CD4-positive, alpha-beta T cell (primary cell): ENCODE measurements at regions of chr1 and their contacts with region 1.

Region 1: DNA sequence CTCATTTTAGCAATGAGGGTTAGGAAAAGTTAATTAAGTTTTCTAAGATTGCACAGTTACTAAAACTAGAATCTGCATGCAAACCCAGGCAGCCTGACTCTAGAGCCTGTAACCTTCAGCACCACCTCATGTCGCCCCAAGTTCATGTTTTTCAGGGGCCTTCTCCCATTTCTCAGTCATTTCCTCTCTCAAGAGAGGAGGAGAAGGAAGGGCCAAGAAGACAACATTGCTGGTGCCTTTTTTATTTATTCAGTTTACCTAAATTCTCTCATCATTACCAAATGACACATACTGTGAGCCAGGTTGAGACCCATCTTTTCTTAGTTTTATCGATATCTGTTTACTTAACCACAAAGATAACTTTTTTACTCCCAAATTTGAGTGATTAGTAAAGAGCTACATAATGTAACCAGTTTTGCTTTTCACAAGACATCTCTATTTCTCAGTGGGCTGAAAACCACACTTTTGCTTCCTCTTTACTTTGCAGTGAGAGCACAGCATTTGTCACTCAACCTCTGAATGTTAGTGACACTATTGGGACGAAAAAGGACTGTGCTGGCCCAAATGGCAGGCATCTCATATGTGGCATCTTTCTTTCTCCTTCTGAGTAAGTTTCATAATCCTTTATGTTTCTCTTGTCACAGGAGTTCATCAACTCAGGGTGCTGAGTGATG is at the start of gene CD101:
- DNase-seq: peak in 3 of 14 experiments; percentile 43 to 52 (median 44)
- ATAC-seq: peak; percentile 64
- H3K4me3 ChIP-seq: no peak within 1 kb of the TSS
- H3K4me3 Mint-ChIP-seq: peak within 1 kb of the TSS; percentile 62
- H3K27ac ChIP-seq: peak within 1 kb of the TSS in 1 of 2 donors; percentile 39
- H3K27ac Mint-ChIP-seq: peak within 1 kb of the TSS; percentile 76
- H3K4me1 ChIP-seq: peaks cover 28% of the 10 kb centered on the region
- H3K4me1 Mint-ChIP-seq: peaks cover 56% of the 10 kb centered on the region
- H3K27me3 ChIP-seq: no peaks in the 10 kb centered on the region
- H3K27me3 Mint-ChIP-seq: no peaks in the 10 kb centered on the region
- CTCF ChIP-seq: no peak
- total RNA-seq, gene CD101: 2.1 to 2.2 TPM

Region 2: GRCh38 chr1:117036018-117036461 is 34.6 kb after region 1 on chr1:
- CTCF ChIA-PET with region 1: no interaction called
- POLR2A ChIA-PET with region 1: no interaction called
- intact Hi-C with region 1: loop called in 1 of 2 experiments (anchors 5 kb)
- DNase-seq: no peak
- ATAC-seq: no peak
- H3K4me3 ChIP-seq: no peak overlapping the region
- H3K4me3 Mint-ChIP-seq: no peak overlapping the region
- H3K27ac ChIP-seq: no peak overlapping the region
- H3K27ac Mint-ChIP-seq: no peak overlapping the region
- H3K4me1 ChIP-seq: peaks cover 5% of the 10 kb centered on the region
- H3K4me1 Mint-ChIP-seq: peaks cover 18% of the 10 kb centered on the region
- H3K27me3 ChIP-seq: no peaks in the 10 kb centered on the region
- H3K27me3 Mint-ChIP-seq: no peaks in the 10 kb centered on the region
- CTCF ChIP-seq: no peak

Region 3: GRCh38 chr1:117512743-117513321 is 511.4 kb after region 1 on chr1:
- CTCF ChIA-PET with region 1: no interaction called
- POLR2A ChIA-PET with region 1: no interaction called
- intact Hi-C with region 1: no loop called
- DNase-seq: peak in 3 of 14 experiments; percentile 40 to 52 (median 42)
- ATAC-seq: no peak
- H3K4me3 ChIP-seq: no peak overlapping the region
- H3K4me3 Mint-ChIP-seq: no peak overlapping the region
- H3K27ac ChIP-seq: no peak overlapping the region
- H3K27ac Mint-ChIP-seq: no peak overlapping the region
- H3K4me1 ChIP-seq: no peaks in the 10 kb centered on the region
- H3K4me1 Mint-ChIP-seq: no peaks in the 10 kb centered on the region
- H3K27me3 ChIP-seq: no peaks in the 10 kb centered on the region
- H3K27me3 Mint-ChIP-seq: no peaks in the 10 kb centered on the region
- CTCF ChIP-seq: peak; percentile 60

Region 4: GRCh38 chr1:117886101-117886795 is 884.9 kb after region 1 on chr1:
- CTCF ChIA-PET with region 1: no interaction called
- POLR2A ChIA-PET with region 1: no interaction called
- intact Hi-C with region 1: no loop called
- DNase-seq: no peak
- ATAC-seq: no peak
- H3K4me3 ChIP-seq: no peak overlapping the region
- H3K4me3 Mint-ChIP-seq: no peak overlapping the region
- H3K27ac ChIP-seq: no peak overlapping the region
- H3K27ac Mint-ChIP-seq: no peak overlapping the region
- H3K4me1 ChIP-seq: no peaks in the 10 kb centered on the region
- H3K4me1 Mint-ChIP-seq: no peaks in the 10 kb centered on the region
- H3K27me3 ChIP-seq: no peaks in the 10 kb centered on the region
- H3K27me3 Mint-ChIP-seq: no peaks in the 10 kb centered on the region
- CTCF ChIP-seq: no peak